CD4-positive, alpha-beta memory T cell (primary cell): ENCODE measurements at regions of chr12 and their contacts with region 1.

Region 1: DNA sequence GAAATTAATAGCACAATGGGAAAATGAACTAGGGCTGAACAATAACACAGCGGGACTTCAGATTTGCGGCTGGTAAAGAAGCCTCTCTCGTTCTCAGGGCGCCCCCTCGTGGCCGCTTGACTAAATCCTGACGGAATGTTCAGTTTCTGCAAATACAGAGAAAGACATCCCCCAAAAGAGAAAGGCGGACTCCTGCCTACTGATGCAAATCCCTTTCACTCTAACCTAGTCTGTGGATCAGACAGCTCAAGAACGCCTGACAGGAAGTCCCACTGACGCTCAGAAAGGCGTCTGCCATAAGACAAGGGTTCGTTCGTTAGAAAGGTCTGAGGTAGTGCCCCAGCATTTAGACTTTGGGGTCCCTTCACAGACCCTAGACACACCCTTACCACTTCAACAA is 2.5 kb downstream of the NUAK1 start:
- DNase-seq: peak in 4 of 5 donors; percentile 46 to 54 (median 51)
- H3K4me3 ChIP-seq: no peak overlapping the region
- H3K4me3 Mint-ChIP-seq: peak overlapping the region in 3 of 8 donors; percentile 17 to 30 (median 22)
- H3K27ac ChIP-seq: no peak overlapping the region
- H3K27ac Mint-ChIP-seq: no peak overlapping the region
- H3K4me1 ChIP-seq: no peaks in the 10 kb centered on the region
- H3K4me1 Mint-ChIP-seq: peaks cover 4 to 23% (median 9%) of the 10 kb centered on the region in 4 donors
- H3K27me3 ChIP-seq: peaks cover 20% of the 10 kb centered on the region
- H3K27me3 Mint-ChIP-seq: peaks cover 35 to 69% of the 10 kb centered on the region in 2 donors

Region 2: DNA sequence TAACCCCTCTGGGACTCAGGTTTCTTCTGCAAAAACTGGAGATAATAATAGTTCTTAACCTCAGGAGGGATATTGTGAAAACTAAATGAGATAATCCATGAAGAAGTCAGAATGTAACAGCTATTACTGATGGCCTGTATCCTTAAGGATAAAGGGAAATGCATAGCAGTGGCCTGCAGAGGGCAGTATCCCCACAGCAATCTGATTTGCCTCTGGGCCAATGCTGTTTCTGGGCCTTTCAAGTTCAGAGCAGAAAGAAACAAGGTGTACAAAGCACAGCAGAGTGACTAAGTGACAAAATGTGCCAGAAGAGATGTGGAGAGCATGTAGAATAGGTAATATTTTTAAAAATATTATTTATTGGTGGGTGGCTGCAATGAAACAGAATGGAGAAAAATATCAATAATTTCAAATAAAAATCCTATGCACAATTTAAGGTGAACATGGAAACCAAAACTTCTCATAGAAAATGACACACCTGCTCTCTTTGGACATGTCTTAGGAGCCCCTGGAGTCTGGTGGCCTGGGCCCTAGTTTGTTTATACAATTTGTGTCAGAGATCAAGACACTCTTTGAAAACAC is 715.5 kb before region 1 on chr12:
- CTCF ChIA-PET with region 1: interaction called, 84 read pairs
- POLR2A ChIA-PET with region 1: no interaction called
- intact Hi-C with region 1: no loop called
- DNase-seq: peak; percentile 39 to 53 (median 46)
- H3K4me3 ChIP-seq: no peak overlapping the region
- H3K4me3 Mint-ChIP-seq: no peak overlapping the region
- H3K27ac ChIP-seq: no peak overlapping the region
- H3K27ac Mint-ChIP-seq: no peak overlapping the region
- H3K4me1 ChIP-seq: no peaks in the 10 kb centered on the region
- H3K4me1 Mint-ChIP-seq: peaks cover 0 to 1% (median under 1%) of the 10 kb centered on the region in 4 donors
- H3K27me3 ChIP-seq: no peaks in the 10 kb centered on the region
- H3K27me3 Mint-ChIP-seq: peaks cover 2 to 3% of the 10 kb centered on the region in 2 donors

Region 3: DNA sequence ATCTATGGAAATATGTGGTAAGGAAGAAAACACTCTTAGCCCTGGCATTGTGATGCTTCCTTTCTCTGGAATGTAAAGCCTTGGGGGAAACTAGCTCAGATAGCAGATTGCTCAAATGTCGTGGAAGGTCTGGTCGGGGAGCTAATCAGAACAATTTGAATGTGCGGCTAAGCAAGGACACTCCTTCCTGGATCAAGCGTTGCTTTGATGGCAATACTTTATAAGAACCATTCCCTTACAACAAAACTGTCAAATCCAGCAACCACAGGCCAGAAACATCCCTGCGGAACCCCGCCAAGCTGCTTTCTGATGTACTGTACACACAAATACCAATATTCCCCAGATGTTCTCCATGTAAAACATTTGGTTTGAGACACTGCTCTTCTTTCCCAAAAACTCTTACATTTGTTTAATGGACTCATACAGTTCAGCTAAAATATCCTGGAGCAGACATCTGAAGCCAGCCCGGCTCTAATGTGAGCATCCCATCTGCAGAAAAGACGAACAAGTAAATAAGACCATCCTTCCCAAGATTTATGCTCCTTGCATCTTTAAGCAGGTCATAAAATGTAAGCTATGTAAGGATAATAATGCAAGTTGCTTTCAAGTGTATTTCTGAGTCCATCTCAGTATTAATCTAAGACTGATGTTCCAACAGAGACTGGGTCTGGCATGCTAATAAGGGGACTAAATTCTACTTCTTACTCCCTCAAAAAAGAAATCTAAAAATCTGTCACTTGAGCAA is 17.7 kb before region 1 on chr12:
- CTCF ChIA-PET with region 1: interaction called, 20 read pairs
- POLR2A ChIA-PET with region 1: no interaction called
- intact Hi-C with region 1: no loop called
- DNase-seq: no peak
- H3K4me3 ChIP-seq: no peak overlapping the region
- H3K4me3 Mint-ChIP-seq: no peak overlapping the region
- H3K27ac ChIP-seq: no peak overlapping the region
- H3K27ac Mint-ChIP-seq: no peak overlapping the region
- H3K4me1 ChIP-seq: no peaks in the 10 kb centered on the region
- H3K4me1 Mint-ChIP-seq: no peaks in the 10 kb centered on the region
- H3K27me3 ChIP-seq: no peaks in the 10 kb centered on the region
- H3K27me3 Mint-ChIP-seq: peaks cover 2 to 8% of the 10 kb centered on the region in 2 donors

Region 4: DNA sequence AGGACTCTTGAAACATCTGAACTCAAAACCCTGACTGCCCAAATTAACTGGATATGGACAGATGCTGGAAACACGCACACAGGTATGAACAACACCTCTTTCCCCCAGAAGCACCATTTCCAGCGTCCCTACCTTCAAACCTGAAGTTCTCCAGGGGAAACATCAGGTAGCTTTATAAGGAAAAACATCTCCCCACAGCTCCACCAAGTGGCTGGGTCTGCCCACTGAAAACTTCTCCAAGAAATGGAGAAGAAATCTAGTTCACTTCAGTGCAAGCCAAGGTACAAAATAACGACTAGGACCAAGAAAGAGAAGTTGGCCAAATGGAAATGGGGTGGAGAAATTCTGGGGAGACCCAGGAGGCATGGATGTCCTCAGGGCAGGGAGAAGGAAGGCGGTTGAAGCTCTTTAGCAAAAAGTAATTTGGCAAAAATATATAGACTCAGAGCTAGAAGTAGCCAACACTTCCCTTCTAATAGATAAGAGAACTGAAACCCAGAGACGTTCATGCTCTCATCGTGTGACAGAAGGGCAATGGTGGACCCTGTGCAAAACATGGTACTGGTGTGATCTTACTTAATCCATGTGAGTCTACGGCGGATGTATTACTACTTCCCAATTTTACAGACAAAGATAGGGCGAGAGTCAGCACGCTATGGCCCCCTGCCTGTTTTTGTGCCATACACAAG is 13.0 kb after region 1 on chr12:
- CTCF ChIA-PET with region 1: interaction called, 43 read pairs
- POLR2A ChIA-PET with region 1: no interaction called
- intact Hi-C with region 1: no loop called
- DNase-seq: no peak
- H3K4me3 ChIP-seq: no peak overlapping the region
- H3K4me3 Mint-ChIP-seq: no peak overlapping the region
- H3K27ac ChIP-seq: no peak overlapping the region
- H3K27ac Mint-ChIP-seq: no peak overlapping the region
- H3K4me1 ChIP-seq: no peaks in the 10 kb centered on the region
- H3K4me1 Mint-ChIP-seq: peaks cover 0 to 1% (median 0%) of the 10 kb centered on the region in 4 donors
- H3K27me3 ChIP-seq: no peaks in the 10 kb centered on the region
- H3K27me3 Mint-ChIP-seq: peaks cover 12 to 28% of the 10 kb centered on the region in 2 donors

Region 5: GRCh38 chr12:106157802-106158201 is 21.5 kb after region 1 on chr12:
- CTCF ChIA-PET with region 1: interaction called, 13 read pairs
- POLR2A ChIA-PET with region 1: no interaction called
- intact Hi-C with region 1: no loop called
- DNase-seq: no peak
- H3K4me3 ChIP-seq: no peak overlapping the region
- H3K4me3 Mint-ChIP-seq: no peak overlapping the region
- H3K27ac ChIP-seq: no peak overlapping the region
- H3K27ac Mint-ChIP-seq: no peak overlapping the region
- H3K4me1 ChIP-seq: no peaks in the 10 kb centered on the region
- H3K4me1 Mint-ChIP-seq: no peaks in the 10 kb centered on the region
- H3K27me3 ChIP-seq: no peaks in the 10 kb centered on the region
- H3K27me3 Mint-ChIP-seq: peaks cover 17 to 21% of the 10 kb centered on the region in 2 donors

Region 6: GRCh38 chr12:106436164-106436563 is 299.9 kb after region 1 on chr12:
- CTCF ChIA-PET with region 1: no interaction called
- POLR2A ChIA-PET with region 1: no interaction called
- intact Hi-C with region 1: no loop called
- DNase-seq: no peak
- H3K4me3 ChIP-seq: no peak overlapping the region
- H3K4me3 Mint-ChIP-seq: no peak overlapping the region
- H3K27ac ChIP-seq: no peak overlapping the region
- H3K27ac Mint-ChIP-seq: peak overlapping the region in 1 of 7 donors; percentile 31
- H3K4me1 ChIP-seq: no peaks in the 10 kb centered on the region
- H3K4me1 Mint-ChIP-seq: no peaks in the 10 kb centered on the region
- H3K27me3 ChIP-seq: no peaks in the 10 kb centered on the region
- H3K27me3 Mint-ChIP-seq: no peaks in the 10 kb centered on the region